ENCODE measurements at regions of chr21 and their contacts with region 1.

Region 1: DNA sequence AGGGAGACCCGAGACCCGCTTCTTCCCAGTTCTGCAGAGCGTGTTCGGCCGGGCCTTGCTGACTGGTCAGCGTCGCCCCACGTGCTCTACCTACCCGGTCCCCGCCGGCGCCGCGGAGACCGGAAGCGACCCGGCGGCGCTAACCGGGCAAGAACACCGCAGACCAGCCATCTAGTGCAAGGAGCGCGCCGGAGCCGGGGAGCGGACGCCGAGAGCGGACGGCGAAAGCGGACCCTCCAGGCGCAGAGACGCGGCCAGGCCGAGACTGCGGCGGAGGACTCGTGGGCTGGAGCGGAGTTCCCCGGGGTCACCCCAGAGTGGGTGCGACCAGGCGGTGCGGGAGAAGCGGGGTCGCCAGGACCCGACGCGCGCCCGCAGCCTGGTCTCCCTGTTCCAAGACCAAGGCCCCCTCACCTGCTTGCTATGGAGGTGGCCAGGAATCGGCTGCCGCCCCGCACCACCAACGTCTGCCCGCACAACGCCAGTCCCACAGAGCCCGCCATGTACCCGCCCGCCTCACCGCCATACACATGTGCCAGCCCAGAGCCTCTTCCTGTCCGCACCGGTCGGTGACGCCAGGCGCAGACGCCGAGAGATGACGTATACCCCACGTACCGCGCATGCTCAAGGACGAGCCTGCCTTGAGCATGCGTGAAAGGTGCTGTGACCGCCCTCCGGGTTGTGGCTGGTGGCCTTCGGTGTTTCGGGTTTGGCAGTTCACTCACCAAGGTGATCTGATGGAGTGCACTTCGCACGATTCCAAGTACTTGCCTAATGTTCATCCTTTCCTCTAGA is at the start of gene WDR4:
- DNase-seq: peak; percentile 87
- H3K4me3 ChIP-seq: peak within 1 kb of the TSS; percentile 94
- H3K27me3 ChIP-seq: no peaks in the 10 kb centered on the region
- CTCF ChIP-seq: no peak
- polyA plus RNA-seq, gene WDR4: 9.4 and 13.7 TPM in 2 replicates

Region 2: DNA sequence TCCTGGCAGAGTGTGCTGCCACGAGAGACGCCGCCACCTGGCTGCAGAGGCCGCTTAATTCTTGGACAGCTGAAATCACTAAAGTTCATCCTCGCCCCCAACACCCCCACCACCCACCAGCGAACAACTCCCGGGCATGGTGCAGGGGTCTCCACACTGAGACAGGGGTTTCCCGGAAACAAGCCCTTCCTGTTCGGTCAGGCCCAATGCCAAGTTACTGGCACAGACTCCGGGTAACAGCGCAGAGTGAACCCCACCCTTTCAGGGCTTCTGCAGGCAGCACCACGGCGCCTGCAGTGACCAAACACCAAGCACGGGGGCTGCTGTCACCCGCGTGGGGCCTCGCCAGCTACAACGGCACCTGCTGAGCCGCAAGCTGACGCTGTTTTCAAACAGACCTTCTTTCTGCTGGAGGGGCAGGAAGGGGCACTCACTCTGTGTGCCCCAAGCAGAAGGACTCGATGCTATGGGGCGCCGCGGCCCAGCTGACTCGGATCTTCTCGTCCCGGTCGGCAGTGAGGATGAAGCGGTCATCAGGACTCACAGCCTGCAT is 17.3 kb before region 1 on chr21:
- CTCF ChIA-PET with region 1: no interaction called
- POLR2A ChIA-PET with region 1: no interaction called
- DNase-seq: no peak
- H3K4me3 ChIP-seq: no peak overlapping the region
- H3K27me3 ChIP-seq: no peaks in the 10 kb centered on the region
- CTCF ChIP-seq: no peak

Region 3: GRCh38 chr21:42964546-42965225 is 85.5 kb after region 1 on chr21:
- CTCF ChIA-PET with region 1: no interaction called
- POLR2A ChIA-PET with region 1: interaction called, 22 read pairs
- DNase-seq: no peak
- H3K4me3 ChIP-seq: no peak overlapping the region
- H3K27me3 ChIP-seq: no peaks in the 10 kb centered on the region
- CTCF ChIP-seq: no peak

Measured in BJ (cell line).